Mucosa of descending colon (tissue), 3 donors: ENCODE measurements at regions of chr3 and their contacts with region 1.

Region 1: GRCh38 chr3:118884748-118885206 is 149.9 kb downstream of the IGSF11 start:
- DNase-seq: peak; percentile 54 to 89 (median 78)
- ATAC-seq: peak; percentile 87
- H3K4me3 ChIP-seq: no peak overlapping the region
- H3K4me1 ChIP-seq: no peaks in the 10 kb centered on the region
- CTCF ChIP-seq: peak; percentile 73

Region 2: DNA sequence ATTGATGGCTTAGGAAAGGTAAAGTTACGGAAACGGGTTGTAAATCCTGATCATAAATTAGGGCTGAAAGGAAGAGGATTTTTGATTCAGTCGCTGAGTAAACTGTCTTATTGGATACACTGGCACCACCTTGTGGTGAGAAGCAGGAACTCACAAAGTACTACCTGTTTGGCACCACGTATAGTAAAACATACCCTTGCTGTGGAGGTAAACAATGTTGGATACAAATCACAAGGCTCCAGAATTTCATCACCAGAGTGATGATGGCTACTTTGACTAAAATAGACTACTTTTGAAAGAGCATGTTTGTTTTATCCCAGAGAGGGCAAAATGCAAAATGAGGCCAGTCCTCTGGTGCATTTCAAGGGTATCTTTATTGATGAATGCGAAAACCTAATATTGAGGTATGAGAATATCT is 67.0 kb before region 1 on chr3:
- intact Hi-C with region 1: no loop called
- DNase-seq: peak in 1 of 3 donors; percentile 56
- ATAC-seq: peak; percentile 65
- H3K4me3 ChIP-seq: no peak overlapping the region
- H3K4me1 ChIP-seq: no peaks in the 10 kb centered on the region
- CTCF ChIP-seq: peak; percentile 46

Region 3: DNA sequence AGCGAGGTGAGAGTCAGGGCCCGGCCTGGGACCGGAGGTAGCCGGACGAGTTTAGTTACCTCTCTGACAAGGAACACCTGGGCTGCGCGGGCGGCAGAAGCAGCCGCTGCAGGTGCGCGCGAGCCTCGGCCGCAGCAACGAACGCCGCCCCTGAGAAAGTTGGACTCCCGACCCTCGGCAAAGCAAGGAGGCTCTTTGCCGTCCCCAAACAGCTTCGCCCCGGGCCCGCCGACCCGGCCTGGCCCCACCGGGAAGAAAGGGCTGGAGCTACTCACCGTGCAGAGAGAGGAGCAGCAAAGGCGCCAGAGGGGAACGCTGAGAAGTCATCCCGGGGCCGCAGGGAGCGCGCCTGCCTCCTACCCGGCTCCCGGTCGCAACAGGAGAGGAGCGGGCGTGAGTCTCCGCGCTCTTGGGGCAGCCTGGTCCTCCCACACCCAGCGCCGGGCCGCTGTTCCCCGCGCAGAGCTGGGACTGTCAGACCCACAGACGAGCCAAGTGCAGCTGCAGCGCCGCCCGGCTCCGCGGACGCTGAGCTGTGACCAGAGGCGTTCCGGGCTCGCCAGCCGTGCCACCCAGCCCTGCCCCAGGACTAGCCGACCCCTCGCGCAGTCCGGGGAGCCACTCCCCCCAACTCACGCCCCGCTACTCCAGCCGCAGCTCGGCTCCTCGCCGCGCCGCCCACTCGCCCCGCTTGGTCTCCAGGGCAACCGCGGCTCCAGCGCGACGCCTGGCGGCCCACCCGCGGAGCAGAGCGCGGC is 149.7 kb after region 1 on chr3 and contains the start of gene IGSF11:
- intact Hi-C with region 1: loop called in 1 of 2 experiments (anchors 5 kb)
- DNase-seq: peak; percentile 48 to 59 (median 51)
- ATAC-seq: peak; percentile 92
- H3K4me3 ChIP-seq: no peak within 1 kb of the TSS
- H3K4me1 ChIP-seq: no peaks in the 10 kb centered on the region
- CTCF ChIP-seq: no peak
- total RNA-seq, gene IGSF11: 0.63 to 5.9 TPM in 2 of 3 donors, not detected in the other

Region 4: GRCh38 chr3:119098619-119099222 is 213.9 kb after region 1 on chr3:
- intact Hi-C with region 1: loop called (anchors 5 kb)
- DNase-seq: peak in 1 of 3 donors; percentile 27
- ATAC-seq: no peak
- H3K4me3 ChIP-seq: no peak overlapping the region
- H3K4me1 ChIP-seq: no peaks in the 10 kb centered on the region
- CTCF ChIP-seq: no peak